Calu3 (cell line): ENCODE measurements at regions of chr3 and their contacts with region 1.

Region 1: DNA sequence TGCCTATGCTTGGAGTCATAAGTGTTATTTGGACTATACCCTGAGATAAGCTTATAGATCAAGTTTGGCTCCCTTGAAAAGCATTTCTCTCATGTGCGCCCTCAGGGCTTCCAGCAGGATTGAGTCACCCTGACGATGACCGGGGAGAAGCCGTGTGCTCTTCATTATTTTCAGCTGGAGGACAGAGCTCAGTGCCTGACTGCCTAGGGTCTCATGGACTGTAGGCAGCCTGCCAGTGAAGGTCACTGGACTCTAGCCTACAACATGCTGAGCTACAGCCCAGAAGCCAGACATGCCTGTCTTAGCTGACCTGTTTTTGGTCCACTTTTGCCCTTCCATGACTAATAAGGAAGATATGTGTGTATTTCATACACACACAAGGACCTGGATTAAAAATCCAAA is 31.6 kb upstream of the NUDT16 start:
- DNase-seq: peak; percentile 41
- H3K4me3 Mint-ChIP-seq: no peak overlapping the region
- H3K27ac Mint-ChIP-seq: no peak overlapping the region
- H3K4me1 Mint-ChIP-seq: peaks cover 50% of the 10 kb centered on the region
- H3K27me3 Mint-ChIP-seq: no peaks in the 10 kb centered on the region
- CTCF ChIP-seq: no peak

Region 2: GRCh38 chr3:130850044-130850797 is 499.7 kb before region 1 on chr3:
- CTCF ChIA-PET with region 1: no interaction called
- intact Hi-C with region 1: no loop called
- DNase-seq: peak; percentile 72
- H3K4me3 Mint-ChIP-seq: peak overlapping the region; percentile 74
- H3K27ac Mint-ChIP-seq: peak overlapping the region; percentile 96
- H3K4me1 Mint-ChIP-seq: peaks cover 54% of the 10 kb centered on the region
- H3K27me3 Mint-ChIP-seq: no peaks in the 10 kb centered on the region
- CTCF ChIP-seq: no peak

Region 3: GRCh38 chr3:131317667-131318066 is 32.3 kb before region 1 on chr3:
- CTCF ChIA-PET with region 1: interaction called, 3 read pairs
- intact Hi-C with region 1: loop called (anchors 2 kb)
- DNase-seq: no peak
- H3K4me3 Mint-ChIP-seq: no peak overlapping the region
- H3K27ac Mint-ChIP-seq: no peak overlapping the region
- H3K4me1 Mint-ChIP-seq: no peaks in the 10 kb centered on the region
- H3K27me3 Mint-ChIP-seq: no peaks in the 10 kb centered on the region
- CTCF ChIP-seq: no peak

Region 4: DNA sequence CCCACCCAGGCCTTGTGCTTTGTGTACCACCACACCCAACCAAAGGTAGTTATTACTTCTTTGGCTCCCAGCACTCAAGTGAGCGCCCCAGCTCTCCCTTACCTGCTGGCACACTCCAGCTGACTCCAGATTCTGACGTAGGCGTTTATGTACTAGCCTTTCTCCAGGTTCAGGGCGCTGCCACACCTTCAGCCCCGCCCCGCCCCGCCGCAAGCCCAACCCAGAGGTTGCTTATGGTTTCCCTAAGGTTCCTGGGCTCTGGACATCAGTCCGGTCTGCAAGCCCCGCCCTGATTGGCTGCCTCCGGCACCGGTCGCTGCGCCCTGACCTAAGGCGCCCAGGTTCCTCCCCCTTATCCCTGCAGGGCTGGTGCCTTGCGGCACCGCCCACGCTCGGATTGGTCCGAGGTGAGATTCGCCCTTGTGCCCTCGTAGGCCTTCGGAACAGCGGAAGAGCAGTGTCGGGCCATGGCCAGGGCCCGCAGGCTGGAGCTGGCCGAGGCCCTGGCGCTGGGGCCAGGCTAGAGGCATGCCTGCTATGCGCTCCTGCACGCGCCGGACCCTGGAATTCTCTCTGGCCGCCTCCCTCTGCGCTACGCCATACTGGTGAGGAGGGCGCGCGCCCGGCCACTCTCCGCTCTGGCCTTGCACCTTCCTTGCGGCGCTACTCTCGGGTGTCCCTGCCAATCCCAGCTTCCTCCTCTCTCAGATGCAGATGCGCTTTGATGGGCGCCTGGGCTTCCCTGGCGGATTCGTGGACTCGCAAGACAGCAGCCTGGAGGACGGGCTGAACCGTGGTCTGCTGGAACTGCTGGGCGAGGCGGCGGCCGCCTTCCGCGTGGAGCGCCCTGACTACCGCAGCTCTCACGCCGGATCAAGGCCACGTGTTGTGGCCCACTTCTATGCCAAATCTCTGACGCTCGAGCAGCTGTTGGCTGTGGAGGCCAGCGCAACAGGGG is 11.8 kb after region 1 on chr3:
- CTCF ChIA-PET with region 1: interaction called, 11 read pairs
- intact Hi-C with region 1: no loop called
- DNase-seq: peak; percentile 100
- H3K4me3 Mint-ChIP-seq: peak overlapping the region; percentile 71
- H3K27ac Mint-ChIP-seq: peak overlapping the region; percentile 77
- H3K4me1 Mint-ChIP-seq: peaks cover 34% of the 10 kb centered on the region
- H3K27me3 Mint-ChIP-seq: no peaks in the 10 kb centered on the region
- CTCF ChIP-seq: no peak

Region 5: GRCh38 chr3:131402391-131403039 is 52.6 kb after region 1 on chr3:
- CTCF ChIA-PET with region 1: no interaction called
- intact Hi-C with region 1: no loop called
- DNase-seq: no peak
- H3K4me3 Mint-ChIP-seq: no peak overlapping the region
- H3K27ac Mint-ChIP-seq: no peak overlapping the region
- H3K4me1 Mint-ChIP-seq: peaks cover 17% of the 10 kb centered on the region
- H3K27me3 Mint-ChIP-seq: no peaks in the 10 kb centered on the region
- CTCF ChIP-seq: no peak

Region 6: GRCh38 chr3:131535596-131535995 is 185.6 kb after region 1 on chr3:
- CTCF ChIA-PET with region 1: no interaction called
- intact Hi-C with region 1: no loop called
- DNase-seq: no peak
- H3K4me3 Mint-ChIP-seq: no peak overlapping the region
- H3K27ac Mint-ChIP-seq: no peak overlapping the region
- H3K4me1 Mint-ChIP-seq: no peaks in the 10 kb centered on the region
- H3K27me3 Mint-ChIP-seq: no peaks in the 10 kb centered on the region
- CTCF ChIP-seq: no peak